ENCODE measurements at regions of chr17 and their contacts with region 1.

Region 1: DNA sequence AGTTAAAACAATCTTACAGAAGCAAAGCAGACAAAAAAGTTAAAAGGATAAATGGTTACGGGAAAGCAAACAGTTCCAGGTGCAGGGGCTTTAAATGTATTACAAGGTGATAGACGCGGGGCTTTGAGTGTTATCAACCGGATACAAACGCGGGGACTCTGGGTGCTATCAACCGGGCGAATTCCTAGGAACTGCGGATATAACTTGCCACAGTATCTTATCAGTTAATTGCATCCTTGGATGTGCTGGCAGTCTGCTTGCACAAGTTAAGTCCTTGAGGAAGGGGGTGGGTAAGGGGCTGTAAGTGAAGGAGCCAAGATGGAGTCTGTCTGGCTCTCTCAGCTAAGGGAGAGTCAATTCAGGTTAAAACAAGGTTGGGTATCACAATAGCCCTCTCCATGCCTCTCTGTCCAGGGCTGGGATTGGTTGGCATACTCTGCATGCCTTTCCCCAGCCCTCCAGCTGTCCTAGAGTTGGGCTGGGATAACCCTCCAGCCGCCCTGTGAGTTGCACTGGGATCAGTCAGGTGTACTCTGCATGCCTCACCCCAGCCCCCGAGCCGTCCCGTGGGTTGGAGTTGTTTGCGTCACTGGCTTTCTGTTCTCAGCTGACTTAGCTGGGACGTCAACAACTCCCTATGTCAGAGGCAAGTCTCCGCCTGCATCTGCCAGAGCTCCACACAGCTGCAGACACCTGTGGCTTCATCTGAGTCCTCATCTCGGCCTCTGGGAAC is 40.9 kb downstream of the TMEM235 start:
- DNase-seq: no peak
- H3K4me3 ChIP-seq: no peak overlapping the region
- H3K27ac ChIP-seq: no peak overlapping the region; the same call in 1 of the 2 replicates
- H3K4me1 ChIP-seq: peaks cover 16 to 50% (median 39%) of the 10 kb centered on the region in 4 experiments
- H3K27me3 ChIP-seq: peaks cover 0 to 2% (median 0%) of the 10 kb centered on the region in 4 experiments; a peak in 4 of 7 replicates
- CTCF ChIP-seq: no peak
- EP300 ChIP-seq: no peak
- POLR2A ChIP-seq: no peak
- RAD21 ChIP-seq: no peak

Region 2: DNA sequence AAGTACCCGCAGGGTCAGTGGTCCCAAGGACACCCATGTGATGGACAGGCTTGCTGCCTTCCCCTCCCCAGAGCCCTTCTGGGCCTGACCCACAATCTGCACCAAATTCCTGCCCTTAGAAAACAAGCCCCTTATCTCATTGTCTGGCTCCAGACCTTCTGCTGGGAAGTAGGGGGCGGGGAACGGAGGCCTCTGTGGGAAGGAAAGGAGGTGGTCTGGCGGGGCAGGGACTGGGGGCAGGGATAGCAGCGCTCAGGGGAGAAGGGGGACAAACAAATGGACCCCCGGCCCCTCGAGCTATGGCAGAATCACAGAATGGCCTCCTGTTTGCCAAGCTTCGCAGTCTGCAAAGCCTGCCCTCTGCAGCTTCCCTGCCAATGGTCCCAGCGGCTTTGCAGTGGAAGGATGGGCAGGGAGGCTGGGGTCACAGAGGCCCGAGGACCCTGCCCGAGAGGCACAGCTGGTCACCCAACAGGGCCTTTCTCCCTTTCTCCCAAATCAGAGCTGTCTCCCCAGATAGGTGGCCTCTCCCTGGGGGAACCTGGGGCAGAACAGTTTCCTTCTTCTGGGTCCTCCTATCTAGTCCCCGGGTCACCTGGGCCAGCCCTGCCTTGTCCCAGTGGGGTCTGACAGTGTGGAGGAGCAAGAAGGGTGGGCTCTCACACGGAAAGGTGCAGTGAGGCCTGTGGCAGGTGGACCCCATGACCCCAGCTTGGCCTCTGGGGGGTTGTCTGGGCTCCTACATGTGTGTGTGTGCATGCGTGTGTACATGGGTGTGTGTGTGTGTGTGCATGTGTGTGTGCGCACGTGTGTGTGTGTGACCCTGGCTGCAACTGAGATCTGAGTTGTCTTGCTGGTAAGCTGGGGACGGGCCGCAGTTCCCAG is 15.4 kb before region 1 on chr17:
- CTCF ChIA-PET with region 1: interaction called, 50 read pairs
- POLR2A ChIA-PET with region 1: interaction called, 23 read pairs
- DNase-seq: no peak
- H3K4me3 ChIP-seq: no peak overlapping the region
- H3K27ac ChIP-seq: no peak overlapping the region
- H3K4me1 ChIP-seq: peaks cover 0 to 28% (median 21%) of the 10 kb centered on the region in 4 experiments; a peak in 6 of 7 replicates
- H3K27me3 ChIP-seq: no peaks in the 10 kb centered on the region
- CTCF ChIP-seq: no peak
- EP300 ChIP-seq: no peak
- POLR2A ChIP-seq: no peak
- RAD21 ChIP-seq: no peak

Region 3: DNA sequence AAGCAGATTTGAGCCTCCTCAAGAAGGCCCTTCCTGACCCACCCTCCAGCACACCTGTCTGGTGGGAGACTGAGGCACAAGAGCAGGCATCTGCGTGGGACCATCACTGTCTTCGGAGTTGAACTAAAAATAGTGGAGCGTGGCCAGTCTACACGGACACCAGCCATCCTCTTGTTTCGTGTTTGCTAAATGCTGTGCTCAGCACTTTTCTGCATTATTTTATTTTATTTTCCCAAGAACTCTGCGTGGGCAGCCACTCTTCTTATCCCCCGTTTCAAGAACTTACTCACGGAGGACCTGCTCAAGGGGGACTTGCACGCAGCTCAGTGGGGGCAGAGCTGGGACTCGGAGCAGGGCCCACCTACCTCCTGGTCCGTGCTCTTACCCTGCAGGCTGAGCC is 26.7 kb after region 1 on chr17:
- CTCF ChIA-PET with region 1: no interaction called
- POLR2A ChIA-PET with region 1: no interaction called
- DNase-seq: no peak
- H3K4me3 ChIP-seq: no peak overlapping the region
- H3K27ac ChIP-seq: no peak overlapping the region
- H3K4me1 ChIP-seq: no peaks in the 10 kb centered on the region
- H3K27me3 ChIP-seq: no peaks in the 10 kb centered on the region
- CTCF ChIP-seq: no peak
- EP300 ChIP-seq: no peak
- POLR2A ChIP-seq: no peak
- RAD21 ChIP-seq: no peak

Region 4: DNA sequence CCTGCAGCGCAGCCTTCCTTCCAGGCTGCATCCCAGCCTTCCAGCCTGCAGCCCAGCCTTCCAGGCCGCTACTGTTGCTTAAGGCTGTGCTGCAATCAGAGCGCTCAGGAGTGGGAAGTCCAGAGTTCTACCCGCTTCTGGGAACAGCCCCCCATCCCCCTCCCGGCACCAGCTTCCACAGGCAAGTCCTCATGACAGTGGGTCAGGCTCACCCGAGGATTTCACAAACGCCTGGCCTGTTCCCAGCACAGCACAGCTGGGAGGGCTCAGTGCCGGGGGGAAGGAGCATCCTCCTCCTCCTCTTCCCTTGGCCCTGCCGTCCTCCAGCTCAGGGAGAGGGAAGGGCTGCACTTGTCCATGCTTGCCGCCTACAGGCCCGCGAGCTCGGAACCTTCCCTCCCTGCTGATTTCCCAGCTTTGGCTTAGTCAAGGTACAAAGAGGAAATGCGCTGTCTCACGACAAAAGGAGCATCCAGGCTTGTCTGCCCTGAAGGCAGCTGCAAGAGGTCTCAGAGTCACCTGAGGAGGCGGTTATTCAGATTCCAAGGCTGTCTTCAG is 79.2 kb after region 1 on chr17:
- CTCF ChIA-PET with region 1: no interaction called
- POLR2A ChIA-PET with region 1: no interaction called
- DNase-seq: peak; percentile 73 to 76
- H3K4me3 ChIP-seq: peak overlapping the region in 3 of 4 experiments; percentile 13 to 54 (median 26); a peak in 4 of 8 replicates
- H3K27ac ChIP-seq: peak overlapping the region; percentile 46
- H3K4me1 ChIP-seq: peaks cover 15 to 35% (median 20%) of the 10 kb centered on the region in 4 experiments
- H3K27me3 ChIP-seq: peaks cover 0 to 11% (median 7%) of the 10 kb centered on the region in 4 experiments; a peak in 4 of 7 replicates
- CTCF ChIP-seq: peak in 1 of 3 experiments; percentile 3; a peak in 1 of 4 replicates
- EP300 ChIP-seq: no peak
- POLR2A ChIP-seq: no peak
- RAD21 ChIP-seq: peak in 1 of 2 experiments; percentile 16; a peak in 2 of 4 replicates